Dendritic cell treated with granulocyte-macrophage colony-stimulating factor and Interleukin-4, amounts not matched to agents 40 ng/mL and 50 ng/mL, for 4 days (primary cell): ENCODE measurements at regions of chr22 and their contacts with region 1.

Region 1: GRCh38 chr22:40679964-40680818 is 907 bp downstream of the MCHR1 start:
- H3K4me3 Mint-ChIP-seq: no peak overlapping the region
- H3K27ac Mint-ChIP-seq: no peak overlapping the region
- H3K4me1 Mint-ChIP-seq: peaks cover 39% of the 10 kb centered on the region
- H3K27me3 Mint-ChIP-seq: peaks cover 42% of the 10 kb centered on the region

Region 2: GRCh38 chr22:40610329-40610850 is 69.8 kb before region 1 on chr22:
- intact Hi-C with region 1: no loop called
- H3K4me3 Mint-ChIP-seq: no peak overlapping the region
- H3K27ac Mint-ChIP-seq: no peak overlapping the region
- H3K4me1 Mint-ChIP-seq: peaks cover 23% of the 10 kb centered on the region
- H3K27me3 Mint-ChIP-seq: no peaks in the 10 kb centered on the region

Region 3: DNA sequence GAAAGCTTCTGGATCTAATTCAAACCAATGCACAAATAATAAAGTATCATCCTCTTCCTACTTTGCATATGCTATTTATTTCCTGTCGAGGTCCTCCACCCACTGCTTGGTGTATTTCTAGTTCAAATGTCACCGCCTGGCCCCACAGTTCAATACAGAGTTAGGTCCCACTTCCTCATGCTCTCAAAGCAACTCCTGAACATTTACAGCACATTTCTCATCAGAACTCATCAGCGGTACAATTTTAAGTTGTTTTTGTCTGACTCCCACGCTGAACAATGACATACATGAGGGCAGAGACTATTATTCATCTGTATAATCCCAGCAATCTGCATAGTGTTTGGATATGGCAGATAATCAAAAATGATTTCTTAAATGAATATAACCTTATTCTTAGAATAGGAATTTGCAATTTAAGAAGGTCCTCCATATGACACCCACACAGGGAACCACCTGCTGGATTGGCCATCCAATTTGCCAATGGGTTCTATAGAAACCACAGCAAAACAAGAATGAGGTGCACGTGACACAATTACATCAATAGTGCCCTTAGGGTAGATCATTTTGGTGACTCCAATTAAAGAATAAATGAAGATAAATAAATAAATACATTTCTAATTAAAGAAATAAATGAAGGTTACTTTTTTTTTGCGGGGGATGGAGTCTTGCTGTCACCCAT is 84.7 kb after region 1 on chr22:
- intact Hi-C with region 1: loop called (anchors 1 kb)
- H3K4me3 Mint-ChIP-seq: no peak overlapping the region
- H3K27ac Mint-ChIP-seq: no peak overlapping the region
- H3K4me1 Mint-ChIP-seq: peaks cover 9% of the 10 kb centered on the region
- H3K27me3 Mint-ChIP-seq: no peaks in the 10 kb centered on the region

Region 4: DNA sequence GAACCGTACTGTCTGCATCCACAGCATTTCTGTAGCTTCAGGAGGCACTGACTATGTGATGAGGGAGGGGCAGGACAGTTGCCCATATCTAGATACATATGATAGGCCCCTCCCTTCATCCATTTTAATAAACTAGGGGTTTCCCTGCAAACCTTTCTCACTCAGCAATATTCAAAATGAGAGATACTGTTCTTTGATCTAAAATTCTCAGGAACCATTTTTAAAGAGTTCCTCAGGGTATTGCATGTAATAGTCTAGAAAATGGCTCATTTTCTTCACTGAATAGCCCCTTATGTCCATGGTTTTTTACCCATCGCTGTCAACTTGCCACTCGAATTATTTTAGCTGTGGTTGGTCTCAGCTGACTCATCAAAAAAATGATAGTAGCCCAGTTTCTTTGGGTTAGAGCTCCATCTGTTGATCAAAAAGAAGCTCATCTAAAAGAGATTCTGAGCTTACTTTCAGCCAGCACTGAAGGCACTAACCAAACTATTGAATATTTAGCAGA is 218.7 kb after region 1 on chr22:
- intact Hi-C with region 1: loop called (anchors 1 kb)
- H3K4me3 Mint-ChIP-seq: no peak overlapping the region
- H3K27ac Mint-ChIP-seq: no peak overlapping the region
- H3K4me1 Mint-ChIP-seq: no peaks in the 10 kb centered on the region
- H3K27me3 Mint-ChIP-seq: no peaks in the 10 kb centered on the region